ENCODE measurements at regions of chr3 and their contacts with region 1.

Region 1: DNA sequence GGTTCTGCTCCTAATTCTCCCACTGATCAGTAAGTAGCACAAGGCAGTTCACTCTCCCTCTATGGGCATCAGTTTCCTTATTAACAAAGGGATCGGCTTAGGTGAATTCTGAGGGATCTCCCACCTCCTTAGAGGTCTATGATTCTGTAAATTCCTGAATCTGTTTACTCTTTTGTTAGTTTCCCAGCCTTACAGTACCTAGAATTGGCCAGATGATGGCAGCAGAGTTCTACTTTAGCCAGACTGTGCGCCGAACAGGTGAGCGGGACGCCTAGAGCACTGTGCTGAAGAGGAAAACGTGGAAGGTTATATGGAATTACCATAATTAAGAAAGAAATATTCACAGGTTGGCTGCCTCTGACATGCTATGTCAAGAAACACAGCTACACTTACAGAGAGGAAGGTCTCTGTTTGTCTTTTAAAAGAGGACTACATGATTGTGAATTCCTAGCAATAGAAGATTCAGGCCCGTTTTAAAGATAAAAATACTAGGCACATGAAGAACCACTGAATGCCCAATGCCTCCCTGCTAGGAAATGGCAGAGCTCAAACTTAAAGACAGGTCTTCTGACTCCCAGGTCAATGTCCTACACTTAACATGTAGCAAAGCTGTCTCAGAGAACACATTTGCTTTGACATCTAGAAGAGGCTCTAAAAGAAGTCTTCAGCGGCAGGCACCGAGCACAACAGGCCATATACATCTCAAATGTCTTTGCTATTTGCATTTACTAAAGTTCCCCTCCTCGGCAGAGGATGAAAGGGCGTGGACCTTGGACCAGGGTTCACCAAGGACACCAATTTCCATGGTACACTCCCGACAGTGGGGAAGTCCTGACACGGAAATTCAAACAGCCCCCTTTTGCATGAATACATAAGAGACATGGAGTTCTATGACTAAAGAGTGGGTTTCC is 259.9 kb downstream of the FGF12 start:
- DNase-seq: peak; percentile 47
- H3K4me3 ChIP-seq: no peak overlapping the region
- H3K27ac ChIP-seq: no peak overlapping the region
- H3K4me1 ChIP-seq: no peaks in the 10 kb centered on the region
- H3K27me3 ChIP-seq: no peaks in the 10 kb centered on the region
- CTCF ChIP-seq: peak; percentile 91 to 93

Region 2: DNA sequence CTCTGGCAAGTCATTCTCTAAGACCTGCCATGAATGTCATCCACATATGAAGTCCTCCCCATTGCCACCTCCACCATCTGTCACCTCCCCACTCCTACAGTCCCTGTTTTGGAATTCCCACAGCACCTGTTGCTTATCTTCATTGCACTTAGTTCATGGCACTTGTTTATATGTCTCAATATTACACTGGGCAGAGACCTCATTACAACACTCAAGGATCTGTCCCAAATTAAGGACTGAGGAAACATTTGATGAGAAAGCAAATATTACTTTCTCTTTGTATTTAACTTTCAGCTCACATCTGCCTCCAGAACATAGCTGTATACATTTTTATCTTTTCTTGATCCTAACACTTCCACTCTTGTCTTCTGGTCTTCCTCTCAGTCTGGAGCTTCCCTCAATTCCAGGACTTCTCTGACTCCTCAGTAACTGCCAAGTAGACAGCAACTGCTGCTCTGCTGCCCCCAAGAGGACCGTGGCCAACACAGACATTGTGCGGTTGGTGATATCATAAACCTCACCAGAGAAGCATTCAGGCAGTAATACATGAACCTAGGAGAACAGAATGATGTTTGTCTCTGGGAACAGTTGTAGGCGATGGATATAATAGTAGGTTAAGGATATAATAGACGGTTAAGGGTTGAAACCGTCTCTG is 304.9 kb after region 1 on chr3:
- CTCF ChIA-PET with region 1: interaction called, 8 read pairs
- dilution Hi-C with region 1: no loop called
- in situ Hi-C with region 1: no loop called
- intact Hi-C with region 1: loop called (anchors 10 kb)
- DNase-seq: peak; percentile 27
- H3K4me3 ChIP-seq: no peak overlapping the region
- H3K27ac ChIP-seq: no peak overlapping the region
- H3K4me1 ChIP-seq: no peaks in the 10 kb centered on the region
- H3K27me3 ChIP-seq: no peaks in the 10 kb centered on the region
- CTCF ChIP-seq: peak; percentile 66 to 72

Region 3: GRCh38 chr3:192802957-192803899 is 335.7 kb after region 1 on chr3:
- CTCF ChIA-PET with region 1: no interaction called
- dilution Hi-C with region 1: no loop called
- in situ Hi-C with region 1: no loop called
- intact Hi-C with region 1: loop called (anchors 1 kb)
- DNase-seq: no peak
- H3K4me3 ChIP-seq: no peak overlapping the region
- H3K27ac ChIP-seq: no peak overlapping the region
- H3K4me1 ChIP-seq: no peaks in the 10 kb centered on the region
- H3K27me3 ChIP-seq: no peaks in the 10 kb centered on the region
- CTCF ChIP-seq: peak; percentile 44 to 65